ENCODE measurements at regions of chr1 and their contacts with region 1.

Region 1: GRCh38 chr1:67840449-67840848 is 7.2 kb upstream of the GNG12 start:
- DNase-seq: no peak
- H3K4me3 ChIP-seq: no peak overlapping the region
- H3K27ac ChIP-seq: peak overlapping the region; percentile 43 to 48
- H3K4me1 ChIP-seq: peaks cover 0 to 58% (median 37%) of the 10 kb centered on the region in 4 donors
- H3K27me3 ChIP-seq: no peaks in the 10 kb centered on the region
- CTCF ChIP-seq: no peak

Region 2: DNA sequence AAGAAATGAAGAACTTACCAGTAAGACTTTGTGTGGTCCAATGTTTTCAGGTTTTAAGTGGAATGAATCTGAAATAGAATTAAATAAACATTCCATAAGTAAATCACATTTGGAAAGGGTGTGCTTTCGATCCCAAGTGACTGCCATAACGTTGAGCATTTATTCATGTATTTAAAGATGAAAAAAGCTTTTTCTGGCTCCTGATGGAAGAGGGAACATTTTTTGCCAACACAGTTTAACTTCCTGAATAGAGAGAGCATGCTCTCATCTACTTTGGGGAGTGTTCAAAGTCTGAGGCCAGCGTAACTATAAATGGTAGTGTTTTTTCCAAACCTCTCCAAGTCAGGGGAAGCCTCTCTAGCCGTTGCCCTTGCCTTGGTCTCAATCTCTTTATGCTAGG is 63.0 kb before region 1 on chr1:
- intact Hi-C with region 1: loop called (anchors 5 kb)
- DNase-seq: no peak
- H3K4me3 ChIP-seq: peak overlapping the region in 1 of 2 donors; percentile 12
- H3K27ac ChIP-seq: peak overlapping the region; percentile 71 to 86
- H3K4me1 ChIP-seq: peaks cover 0 to 65% (median 19%) of the 10 kb centered on the region in 4 donors
- H3K27me3 ChIP-seq: no peaks in the 10 kb centered on the region
- CTCF ChIP-seq: no peak

Region 3: GRCh38 chr1:67889953-67890567 is 49.6 kb after region 1 on chr1:
- intact Hi-C with region 1: no loop called
- DNase-seq: no peak
- H3K4me3 ChIP-seq: no peak overlapping the region
- H3K27ac ChIP-seq: no peak overlapping the region
- H3K4me1 ChIP-seq: peaks cover 0 to 8% (median 0%) of the 10 kb centered on the region in 4 donors
- H3K27me3 ChIP-seq: no peaks in the 10 kb centered on the region
- CTCF ChIP-seq: no peak